Panc1 (cell line): ENCODE measurements at regions of chr9 and their contacts with region 1.

Region 1: GRCh38 chr9:84652577-84653061 is 16.9 kb upstream of the NTRK2 start:
- DNase-seq: no peak
- ATAC-seq: no peak
- H3K4me3 ChIP-seq: no peak overlapping the region
- H3K27ac ChIP-seq: no peak overlapping the region
- H3K4me1 ChIP-seq: no peaks in the 10 kb centered on the region
- H3K27me3 ChIP-seq: no peaks in the 10 kb centered on the region
- CTCF ChIP-seq: no peak

Region 2: GRCh38 chr9:84432746-84433145 is 219.9 kb before region 1 on chr9:
- CTCF ChIA-PET with region 1: no interaction called
- POLR2A ChIA-PET with region 1: interaction called, 19 read pairs
- in situ Hi-C with region 1: no loop called
- intact Hi-C with region 1: no loop called
- DNase-seq: no peak
- ATAC-seq: no peak
- H3K4me3 ChIP-seq: no peak overlapping the region
- H3K27ac ChIP-seq: no peak overlapping the region
- H3K4me1 ChIP-seq: no peaks in the 10 kb centered on the region
- H3K27me3 ChIP-seq: no peaks in the 10 kb centered on the region
- CTCF ChIP-seq: no peak

Region 3: DNA sequence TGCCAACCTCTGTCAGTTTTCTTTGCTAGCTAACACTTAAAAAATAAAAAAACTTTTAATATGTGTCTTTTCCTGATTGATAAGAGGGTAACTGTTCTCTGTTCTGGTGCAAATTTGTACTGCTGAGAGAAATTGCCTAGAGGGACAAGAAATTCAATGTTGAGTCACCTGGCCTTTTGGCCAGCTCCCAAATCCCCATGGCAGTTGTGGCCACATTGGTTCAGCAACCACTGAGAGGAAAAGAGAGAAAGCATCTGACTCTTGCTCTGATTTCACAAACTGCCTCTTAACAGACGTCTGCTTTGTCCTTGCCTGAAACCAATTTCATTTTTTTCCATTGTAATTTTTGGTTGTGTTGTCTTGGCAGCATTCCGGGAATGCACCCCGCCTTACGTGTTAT is 59.3 kb after region 1 on chr9:
- CTCF ChIA-PET with region 1: no interaction called
- POLR2A ChIA-PET with region 1: no interaction called
- in situ Hi-C with region 1: no loop called
- intact Hi-C with region 1: loop called (anchors 10 kb)
- DNase-seq: no peak
- ATAC-seq: 0 out of 2 replicates have a peak, but pooled peaks have one; percentile 42
- H3K4me3 ChIP-seq: no peak overlapping the region
- H3K27ac ChIP-seq: no peak overlapping the region
- H3K4me1 ChIP-seq: no peaks in the 10 kb centered on the region
- H3K27me3 ChIP-seq: no peaks in the 10 kb centered on the region
- CTCF ChIP-seq: no peak

Region 4: GRCh38 chr9:84851935-84852585 is 199.4 kb after region 1 on chr9:
- CTCF ChIA-PET with region 1: no interaction called
- POLR2A ChIA-PET with region 1: no interaction called
- in situ Hi-C with region 1: no loop called
- intact Hi-C with region 1: no loop called
- DNase-seq: peak; percentile 4
- ATAC-seq: peak; percentile 83
- H3K4me3 ChIP-seq: no peak overlapping the region
- H3K27ac ChIP-seq: no peak overlapping the region
- H3K4me1 ChIP-seq: no peaks in the 10 kb centered on the region
- H3K27me3 ChIP-seq: no peaks in the 10 kb centered on the region
- CTCF ChIP-seq: no peak